ENCODE measurements at regions of chr10 and their contacts with region 1.

Region 1: DNA sequence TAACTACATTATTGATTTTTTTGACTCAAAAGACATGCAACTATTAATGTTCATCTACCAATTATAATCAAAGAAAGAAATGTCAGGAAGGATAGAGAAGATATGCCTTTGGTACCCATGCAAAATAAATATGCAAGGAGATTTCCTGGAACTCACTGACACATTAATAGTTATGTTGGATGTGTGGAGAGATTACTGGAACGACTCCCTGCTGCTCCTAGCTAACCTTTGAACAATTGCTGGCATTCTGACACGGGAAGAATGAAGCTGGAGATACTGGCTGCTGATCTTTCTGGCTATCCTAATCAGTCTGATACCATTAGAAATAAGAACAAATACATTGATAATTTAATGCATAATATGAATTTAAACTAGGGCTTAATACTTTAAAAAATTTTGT is 507.9 kb upstream of the NRG3 start:
- DNase-seq: no peak
- ATAC-seq: no peak
- H3K4me3 ChIP-seq: no peak overlapping the region
- H3K27ac ChIP-seq: no peak overlapping the region
- H3K4me1 ChIP-seq: no peaks in the 10 kb centered on the region
- H3K27me3 ChIP-seq: no peaks in the 10 kb centered on the region
- CTCF ChIP-seq: no peak

Region 2: DNA sequence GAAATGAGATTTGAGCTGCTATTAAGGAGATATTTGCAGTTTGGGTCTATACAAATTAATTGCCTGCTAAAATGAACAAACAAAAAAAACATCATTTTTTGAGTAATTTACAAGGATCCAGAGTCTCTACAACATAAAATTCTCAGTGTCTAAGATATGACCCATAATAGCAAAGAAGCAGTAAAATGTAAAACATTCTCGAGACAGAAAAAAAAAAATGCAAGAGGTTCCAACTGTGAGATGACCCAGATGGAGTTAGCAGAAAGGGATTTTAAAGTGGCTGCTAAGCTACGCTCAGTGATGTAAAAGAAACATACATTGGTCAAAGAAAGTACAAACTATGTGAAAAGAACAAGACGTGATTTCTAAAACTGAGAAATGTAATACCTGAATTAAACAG is 358.4 kb before region 1 on chr10:
- CTCF ChIA-PET with region 1: no interaction called
- POLR2A ChIA-PET with region 1: no interaction called
- in situ Hi-C with region 1: no loop called
- intact Hi-C with region 1: no loop called
- DNase-seq: no peak
- ATAC-seq: no peak
- H3K4me3 ChIP-seq: no peak overlapping the region
- H3K27ac ChIP-seq: no peak overlapping the region
- H3K4me1 ChIP-seq: no peaks in the 10 kb centered on the region
- H3K27me3 ChIP-seq: no peaks in the 10 kb centered on the region
- CTCF ChIP-seq: no peak

Region 3: GRCh38 chr10:81696609-81697384 is 329.7 kb after region 1 on chr10:
- CTCF ChIA-PET with region 1: interaction called, 10 read pairs
- POLR2A ChIA-PET with region 1: no interaction called
- in situ Hi-C with region 1: no loop called
- intact Hi-C with region 1: no loop called
- DNase-seq: no peak
- ATAC-seq: no peak
- H3K4me3 ChIP-seq: no peak overlapping the region
- H3K27ac ChIP-seq: no peak overlapping the region
- H3K4me1 ChIP-seq: no peaks in the 10 kb centered on the region
- H3K27me3 ChIP-seq: no peaks in the 10 kb centered on the region
- CTCF ChIP-seq: no peak